Mammary epithelial cell (primary cell): ENCODE measurements at regions of chr16 and their contacts with region 1.

Region 1: DNA sequence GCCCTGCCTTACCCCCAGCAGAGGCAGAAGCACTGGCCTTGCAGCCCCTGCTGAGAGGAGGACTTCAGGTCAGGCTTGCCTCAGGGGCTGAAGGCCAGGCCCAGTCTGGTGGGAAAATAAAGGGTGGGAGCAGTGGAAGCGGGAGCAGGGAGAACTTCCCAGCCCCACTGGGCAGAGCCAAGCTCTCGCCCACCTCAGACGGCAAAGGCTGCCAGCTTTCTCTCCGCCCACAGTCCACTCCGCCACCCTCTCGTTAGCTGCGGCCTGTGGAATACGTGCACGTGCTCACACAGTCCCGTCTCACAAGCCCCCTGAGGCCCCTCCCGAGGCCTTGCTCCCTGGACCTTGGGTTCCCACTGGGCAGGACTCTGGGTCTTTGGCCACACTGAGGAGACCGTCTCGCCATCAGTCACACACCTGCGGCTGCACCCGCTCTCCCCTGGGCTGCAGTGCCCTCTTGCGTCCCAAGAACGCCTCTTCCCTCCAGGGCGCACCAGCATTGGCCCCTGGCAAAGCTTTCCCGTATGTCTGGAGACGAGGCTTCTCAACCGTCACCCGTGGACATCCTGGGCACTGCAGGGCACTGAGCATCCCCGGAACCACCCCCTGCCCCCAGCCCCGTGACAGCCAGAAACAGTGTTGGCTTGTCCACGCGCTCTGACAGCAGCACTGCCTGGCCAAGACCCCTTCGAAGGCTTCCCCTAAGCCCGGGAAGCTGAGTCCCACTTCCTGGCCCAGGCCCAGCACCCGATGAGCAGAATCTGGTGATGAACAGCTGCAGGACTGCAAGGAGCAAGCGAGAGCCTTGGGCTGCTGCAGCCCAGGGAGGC is 8.3 kb downstream of the MRPL28 start:
- DNase-seq: peak; percentile 73
- H3K4me3 ChIP-seq: peak overlapping the region in 1 of 3 experiments; percentile 20
- H3K27ac ChIP-seq: no peak overlapping the region
- H3K4me1 ChIP-seq: peaks cover 11% of the 10 kb centered on the region
- H3K27me3 ChIP-seq: no peaks in the 10 kb centered on the region
- CTCF ChIP-seq: peak; percentile 88 to 96

Region 2: DNA sequence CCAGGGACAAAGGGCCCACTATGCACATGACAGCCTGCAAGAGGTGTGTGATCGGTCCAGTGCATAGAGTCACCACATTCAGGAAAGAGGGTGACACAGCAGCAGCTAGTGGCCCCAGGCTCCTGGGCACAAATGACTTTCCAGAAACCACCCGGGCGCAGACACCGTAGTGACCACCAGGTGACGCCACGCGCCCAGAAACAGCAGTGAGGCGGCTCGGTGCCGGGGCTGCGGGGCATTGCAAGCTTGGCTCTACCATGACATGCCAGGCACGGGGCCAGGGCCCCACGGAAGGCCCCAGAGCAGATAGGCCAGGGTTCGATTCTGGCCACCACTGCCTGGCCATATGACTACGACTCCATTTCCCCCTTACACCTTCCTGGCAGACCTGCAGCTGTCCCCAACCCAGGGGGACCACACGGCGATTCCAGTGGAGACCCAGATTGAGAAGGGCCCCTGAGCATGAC is 296.4 kb before region 1 on chr16:
- CTCF ChIA-PET with region 1: no interaction called
- dilution Hi-C with region 1: no loop called
- in situ Hi-C with region 1: no loop called
- intact Hi-C with region 1: loop called (anchors 1 kb)
- DNase-seq: peak; percentile 57
- H3K4me3 ChIP-seq: no peak overlapping the region
- H3K27ac ChIP-seq: no peak overlapping the region
- H3K4me1 ChIP-seq: peaks cover 18% of the 10 kb centered on the region
- H3K27me3 ChIP-seq: no peaks in the 10 kb centered on the region
- CTCF ChIP-seq: peak; percentile 90 to 96

Region 3: GRCh38 chr16:117379-118365 is 244.4 kb before region 1 on chr16:
- CTCF ChIA-PET with region 1: no interaction called
- dilution Hi-C with region 1: no loop called
- in situ Hi-C with region 1: no loop called
- intact Hi-C with region 1: loop called (anchors 1 kb)
- DNase-seq: no peak
- H3K4me3 ChIP-seq: no peak overlapping the region
- H3K27ac ChIP-seq: no peak overlapping the region
- H3K4me1 ChIP-seq: peaks cover 11% of the 10 kb centered on the region
- H3K27me3 ChIP-seq: no peaks in the 10 kb centered on the region
- CTCF ChIP-seq: peak; percentile 56 to 77

Region 4: DNA sequence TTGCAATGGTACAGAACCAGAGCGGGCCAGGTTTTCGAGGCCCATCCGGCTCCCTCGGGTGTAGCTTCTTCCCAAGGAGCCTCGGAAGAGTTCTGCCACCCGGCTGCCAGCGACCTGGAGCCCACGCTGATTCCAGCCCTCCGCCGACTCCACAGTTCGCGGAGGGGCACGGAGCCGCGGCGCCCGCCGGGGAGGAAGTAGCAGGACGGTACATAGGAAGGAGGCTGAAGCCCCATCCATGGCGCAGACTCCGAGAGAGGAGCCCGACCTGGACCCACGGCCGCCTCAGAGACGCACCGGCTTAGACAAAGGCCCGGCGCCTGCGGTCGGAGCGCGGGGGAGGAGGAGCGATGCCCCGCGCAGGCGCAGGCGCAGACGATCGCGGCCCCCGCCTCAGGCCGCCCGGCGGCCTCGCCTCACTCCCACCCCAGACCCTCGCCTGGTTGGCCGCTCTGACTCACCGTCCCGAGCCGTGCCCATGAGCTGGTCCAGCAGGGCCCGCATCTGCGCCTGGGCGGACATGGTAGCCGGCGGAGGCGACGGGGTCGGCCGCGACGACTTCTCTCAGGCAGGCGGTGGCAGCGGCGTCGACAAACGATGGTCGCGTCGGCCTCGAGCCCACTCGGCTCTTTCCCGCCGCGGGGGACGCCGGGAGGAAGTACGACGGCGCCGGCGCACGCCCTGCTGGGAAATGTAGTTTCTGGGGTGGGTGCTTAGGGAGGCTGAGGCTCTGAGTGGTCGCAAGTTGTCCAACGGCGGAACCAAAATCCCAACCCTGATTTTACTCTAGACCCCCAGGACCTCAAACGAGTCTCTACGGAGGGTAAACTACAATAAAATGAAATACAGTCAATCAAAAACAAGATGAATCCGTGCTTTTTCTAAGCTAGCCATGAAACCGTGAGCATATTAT is 133.0 kb before region 1 on chr16 and contains the start of gene LUC7L:
- CTCF ChIA-PET with region 1: interaction called, 18 read pairs
- dilution Hi-C with region 1: no loop called
- in situ Hi-C with region 1: no loop called
- intact Hi-C with region 1: no loop called
- DNase-seq: peak; percentile 86
- H3K4me3 ChIP-seq: peak within 1 kb of the TSS; percentile 87 to 97 (median 93)
- H3K27ac ChIP-seq: peak within 1 kb of the TSS; percentile 88
- H3K4me1 ChIP-seq: peaks cover 10% of the 10 kb centered on the region
- H3K27me3 ChIP-seq: no peaks in the 10 kb centered on the region
- CTCF ChIP-seq: no peak
- total RNA-seq, gene LUC7L: 29.3 to 56.8 TPM

Region 5: GRCh38 chr16:273573-273981 is 88.5 kb before region 1 on chr16:
- CTCF ChIA-PET with region 1: no interaction called
- dilution Hi-C with region 1: no loop called
- in situ Hi-C with region 1: no loop called
- intact Hi-C with region 1: no loop called
- DNase-seq: no peak
- H3K4me3 ChIP-seq: no peak overlapping the region
- H3K27ac ChIP-seq: no peak overlapping the region
- H3K4me1 ChIP-seq: peaks cover 7% of the 10 kb centered on the region
- H3K27me3 ChIP-seq: peaks cover 4% of the 10 kb centered on the region
- CTCF ChIP-seq: no peak

Region 6: GRCh38 chr16:324451-325334 is 37.4 kb before region 1 on chr16:
- CTCF ChIA-PET with region 1: no interaction called
- dilution Hi-C with region 1: loop called (anchors 5 kb)
- in situ Hi-C with region 1: no loop called
- intact Hi-C with region 1: no loop called
- DNase-seq: no peak
- H3K4me3 ChIP-seq: no peak overlapping the region
- H3K27ac ChIP-seq: no peak overlapping the region
- H3K4me1 ChIP-seq: peaks cover 16% of the 10 kb centered on the region
- H3K27me3 ChIP-seq: no peaks in the 10 kb centered on the region
- CTCF ChIP-seq: no peak